WTC11 (cell line): ENCODE measurements at regions of chr9 and their contacts with region 1.

Region 1: DNA sequence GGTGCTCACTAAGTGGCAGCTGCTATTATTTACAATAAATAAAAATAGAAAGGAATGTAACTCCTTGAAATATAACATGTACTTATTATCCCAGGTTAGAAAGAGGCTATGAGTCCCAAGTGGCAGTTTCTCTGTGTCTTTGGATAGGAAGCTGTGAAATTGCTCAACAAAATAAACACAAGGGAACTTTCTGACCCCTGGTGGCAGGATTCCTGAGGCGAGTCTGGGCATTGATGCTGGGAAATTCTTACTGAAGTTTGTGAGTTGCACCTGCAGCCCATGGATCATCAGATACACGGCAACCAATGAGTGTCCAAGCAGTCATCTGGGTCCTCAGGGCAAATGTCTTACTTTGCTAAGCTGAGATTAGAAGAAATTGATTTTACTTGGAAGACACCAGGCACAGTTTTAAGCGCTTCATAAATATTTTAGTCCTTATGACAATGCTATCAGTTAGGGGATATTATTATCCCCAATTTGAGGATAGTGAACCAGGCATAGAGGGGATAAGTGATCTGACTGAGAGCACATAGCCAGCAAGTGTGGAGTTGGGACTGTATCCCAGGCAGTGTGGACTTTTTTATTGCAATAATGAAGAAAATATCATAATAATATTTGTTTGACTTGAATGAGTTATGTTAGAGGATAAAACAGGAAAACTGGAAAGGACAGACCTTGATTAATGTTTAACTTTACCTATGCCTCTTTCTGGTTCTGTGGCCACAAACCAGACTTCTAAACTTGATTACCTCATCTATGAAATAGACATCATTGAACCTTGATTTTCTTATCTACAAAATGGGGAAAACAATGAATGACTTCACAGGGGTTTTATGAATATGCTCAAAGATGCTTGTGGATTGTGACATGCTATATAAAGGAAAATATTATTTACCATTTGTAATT is 265.5 kb upstream of the ADAMTSL1 start:
- DNase-seq: peak; percentile 62
- ATAC-seq: peak; percentile 86
- H3K4me3 Mint-ChIP-seq: no peak overlapping the region
- H3K27ac Mint-ChIP-seq: no peak overlapping the region
- H3K4me1 Mint-ChIP-seq: peaks cover 17% of the 10 kb centered on the region
- H3K27me3 Mint-ChIP-seq: no peaks in the 10 kb centered on the region
- CTCF ChIP-seq: 0 out of 2 replicates have a peak, but pooled peaks have one; percentile 23

Region 2: GRCh38 chr9:17824191-17824590 is 384.2 kb before region 1 on chr9:
- CTCF ChIA-PET with region 1: interaction called, 12 read pairs
- POLR2A ChIA-PET with region 1: no interaction called
- DNase-seq: no peak
- ATAC-seq: peak; percentile 85
- H3K4me3 Mint-ChIP-seq: no peak overlapping the region
- H3K27ac Mint-ChIP-seq: peak overlapping the region; percentile 73; the same call in 1 of the 2 replicates
- H3K4me1 Mint-ChIP-seq: peaks cover 19% of the 10 kb centered on the region
- H3K27me3 Mint-ChIP-seq: no peaks in the 10 kb centered on the region
- CTCF ChIP-seq: no peak

Region 3: DNA sequence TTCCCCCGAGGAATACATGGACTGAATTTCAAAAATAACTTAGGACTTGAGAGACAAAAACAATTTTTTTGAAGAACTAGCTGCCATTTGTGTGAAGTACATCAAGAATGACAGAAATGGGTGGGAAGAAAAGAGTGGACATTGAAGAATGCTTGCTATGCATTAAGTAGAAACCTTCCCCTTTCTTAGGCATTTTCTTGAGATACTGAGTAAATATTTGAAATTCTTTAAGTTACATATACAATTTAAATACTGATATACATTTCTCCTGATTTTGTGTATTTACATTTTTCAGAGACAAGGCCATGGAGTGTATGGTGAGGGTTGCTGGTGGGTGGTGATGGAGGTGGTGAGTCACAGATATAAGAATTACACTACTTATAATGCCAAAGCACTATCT is 53.7 kb before region 1 on chr9:
- CTCF ChIA-PET with region 1: interaction called, 5 read pairs
- POLR2A ChIA-PET with region 1: interaction called, 12 read pairs
- DNase-seq: no peak
- ATAC-seq: no peak
- H3K4me3 Mint-ChIP-seq: no peak overlapping the region
- H3K27ac Mint-ChIP-seq: no peak overlapping the region
- H3K4me1 Mint-ChIP-seq: no peaks in the 10 kb centered on the region
- H3K27me3 Mint-ChIP-seq: no peaks in the 10 kb centered on the region
- CTCF ChIP-seq: no peak

Region 4: DNA sequence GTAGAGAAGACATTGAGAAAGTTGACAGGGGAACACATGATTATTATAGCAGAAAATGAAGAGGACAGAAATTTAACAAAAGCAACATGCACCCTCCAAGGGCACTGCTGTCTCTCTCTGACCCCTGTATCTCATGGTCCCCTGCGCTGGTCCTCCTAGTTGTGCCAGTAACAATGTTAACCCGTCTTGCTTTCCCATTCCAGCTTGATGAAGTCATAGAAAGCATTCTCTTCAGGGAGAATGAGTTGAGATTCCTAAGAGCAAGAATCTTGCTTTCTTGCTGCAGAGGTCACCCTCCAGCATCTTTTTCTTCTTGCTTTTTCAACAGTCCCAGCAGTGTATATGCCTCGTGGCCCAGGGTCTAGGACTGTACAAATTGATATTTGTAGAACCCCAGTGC is 14.1 kb before region 1 on chr9:
- CTCF ChIA-PET with region 1: interaction called, 10 read pairs
- POLR2A ChIA-PET with region 1: no interaction called
- DNase-seq: no peak
- ATAC-seq: no peak
- H3K4me3 Mint-ChIP-seq: no peak overlapping the region
- H3K27ac Mint-ChIP-seq: no peak overlapping the region
- H3K4me1 Mint-ChIP-seq: no peaks in the 10 kb centered on the region
- H3K27me3 Mint-ChIP-seq: no peaks in the 10 kb centered on the region
- CTCF ChIP-seq: no peak

Region 5: GRCh38 chr9:18245911-18246310 is 37.5 kb after region 1 on chr9:
- CTCF ChIA-PET with region 1: no interaction called
- POLR2A ChIA-PET with region 1: no interaction called
- DNase-seq: no peak
- ATAC-seq: no peak
- H3K4me3 Mint-ChIP-seq: no peak overlapping the region
- H3K27ac Mint-ChIP-seq: no peak overlapping the region
- H3K4me1 Mint-ChIP-seq: no peaks in the 10 kb centered on the region
- H3K27me3 Mint-ChIP-seq: no peaks in the 10 kb centered on the region
- CTCF ChIP-seq: no peak